ENCODE measurements at regions of chr22 and their contacts with region 1.

Region 1: DNA sequence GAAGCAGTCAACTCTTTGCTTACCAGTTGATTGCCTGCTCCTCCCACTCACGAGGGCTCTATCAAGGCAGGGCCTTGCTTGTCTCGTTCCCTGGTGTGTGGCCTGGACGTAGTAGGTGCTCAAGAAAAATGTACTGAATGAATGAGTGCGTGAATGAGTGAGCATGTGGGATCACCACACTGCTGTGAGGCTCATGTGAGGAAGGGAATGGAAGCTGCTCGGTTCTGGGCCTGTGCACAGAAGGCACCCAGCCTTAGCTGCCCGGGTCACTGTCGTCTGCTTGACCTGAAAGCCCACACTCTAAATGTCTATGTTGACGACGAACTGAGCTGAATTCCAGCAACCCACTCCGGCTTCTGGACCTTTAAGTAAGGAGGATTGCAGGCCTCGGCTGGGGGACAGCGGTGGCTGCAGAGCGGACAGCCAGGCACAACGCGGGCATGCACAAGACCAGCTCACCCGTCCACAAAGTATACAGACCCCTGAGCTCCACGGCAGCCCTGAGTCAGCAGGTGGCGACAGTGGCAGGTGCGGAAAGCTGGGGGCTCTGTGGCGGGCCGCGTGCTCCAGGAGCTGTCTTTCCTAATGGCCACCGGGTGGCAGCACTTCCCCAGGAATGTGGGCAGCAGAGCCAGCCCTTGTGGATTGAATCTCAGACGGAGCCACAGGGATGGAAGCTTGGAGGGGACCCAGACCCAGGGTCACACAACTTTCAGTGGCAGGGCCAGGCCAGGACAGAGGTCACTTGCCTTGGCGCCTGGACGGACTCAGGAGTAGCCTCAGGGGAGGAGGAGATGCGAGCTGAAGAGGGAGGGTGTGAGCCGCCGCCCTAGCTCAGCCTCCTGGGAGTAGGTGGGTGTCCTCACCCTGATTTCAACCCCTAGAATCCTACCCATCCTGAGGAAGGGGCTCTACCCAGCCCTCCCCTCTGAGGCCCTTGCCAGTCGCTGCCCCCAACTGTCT is 5.0 kb upstream of the PICK1 start:
- DNase-seq: peak; percentile 79
- H3K4me3 ChIP-seq: no peak overlapping the region
- H3K27ac ChIP-seq: no peak overlapping the region
- H3K4me1 ChIP-seq: no peaks in the 10 kb centered on the region
- H3K27me3 ChIP-seq: no peaks in the 10 kb centered on the region
- CTCF ChIP-seq: peak; percentile 76 to 96 (median 88)
- POLR2A ChIP-seq: no peak

Region 2: GRCh38 chr22:38109371-38110001 is 57.3 kb after region 1 on chr22:
- intact Hi-C with region 1: loop called (anchors 5 kb)
- DNase-seq: no peak
- H3K4me3 ChIP-seq: no peak overlapping the region
- H3K27ac ChIP-seq: no peak overlapping the region
- H3K4me1 ChIP-seq: no peaks in the 10 kb centered on the region
- H3K27me3 ChIP-seq: no peaks in the 10 kb centered on the region
- CTCF ChIP-seq: no peak
- POLR2A ChIP-seq: no peak